ENCODE measurements at regions of chr20 and their contacts with region 1.

Region 1: DNA sequence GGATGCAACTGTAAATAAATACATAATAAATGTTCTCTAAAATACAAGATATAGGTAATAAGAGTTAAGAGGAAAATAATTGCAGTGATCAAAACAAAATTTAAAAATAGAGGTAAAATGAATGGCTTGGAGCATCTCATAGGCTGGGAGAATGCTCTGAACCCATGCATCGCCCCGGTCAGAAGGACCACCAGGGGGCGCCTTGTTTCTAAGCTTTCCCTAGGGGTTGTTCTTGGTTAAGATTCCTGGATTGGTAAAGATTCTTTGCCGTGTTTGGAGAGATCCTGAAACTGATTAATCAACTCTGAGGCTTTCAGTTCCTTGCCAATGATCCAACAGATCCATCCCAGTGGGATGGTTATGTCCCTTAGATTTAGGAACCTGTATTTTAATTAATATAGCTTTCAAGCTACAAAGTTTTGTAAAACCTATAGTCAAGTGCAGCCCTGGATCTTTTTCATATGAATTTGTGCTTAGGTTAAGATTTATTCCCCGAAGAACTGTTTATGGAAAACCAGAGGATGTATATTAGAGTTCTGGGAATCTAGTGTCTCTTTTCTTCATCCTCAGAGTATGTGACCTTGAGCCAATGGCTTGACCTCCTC is 45.3 kb upstream of the PRELID3B start:
- DNase-seq: peak; percentile 84
- H3K4me3 Mint-ChIP-seq: no peak overlapping the region
- H3K27ac Mint-ChIP-seq: no peak overlapping the region
- H3K4me1 Mint-ChIP-seq: peaks cover 3% of the 10 kb centered on the region
- H3K27me3 Mint-ChIP-seq: peaks cover 18% of the 10 kb centered on the region

Region 2: GRCh38 chr20:59102841-59103299 is 14.9 kb after region 1 on chr20:
- CTCF ChIA-PET with region 1: interaction called, 12 read pairs
- POLR2A ChIA-PET with region 1: no interaction called
- DNase-seq: no peak
- H3K4me3 Mint-ChIP-seq: no peak overlapping the region
- H3K27ac Mint-ChIP-seq: no peak overlapping the region
- H3K4me1 Mint-ChIP-seq: peaks cover 11% of the 10 kb centered on the region
- H3K27me3 Mint-ChIP-seq: peaks cover 6% of the 10 kb centered on the region

Region 3: GRCh38 chr20:59159493-59160376 is 71.8 kb after region 1 on chr20:
- CTCF ChIA-PET with region 1: interaction called, 18 read pairs
- POLR2A ChIA-PET with region 1: interaction called, 5 read pairs
- DNase-seq: peak; percentile 70
- H3K4me3 Mint-ChIP-seq: peak overlapping the region; percentile 76
- H3K27ac Mint-ChIP-seq: peak overlapping the region; percentile 99
- H3K4me1 Mint-ChIP-seq: peaks cover 68% of the 10 kb centered on the region
- H3K27me3 Mint-ChIP-seq: peaks cover 1% of the 10 kb centered on the region

Region 4: GRCh38 chr20:59207742-59208357 is 119.9 kb after region 1 on chr20:
- CTCF ChIA-PET with region 1: interaction called, 137 read pairs
- POLR2A ChIA-PET with region 1: interaction called, 10 read pairs
- DNase-seq: peak; percentile 80
- H3K4me3 Mint-ChIP-seq: no peak overlapping the region
- H3K27ac Mint-ChIP-seq: no peak overlapping the region
- H3K4me1 Mint-ChIP-seq: peaks cover 2% of the 10 kb centered on the region
- H3K27me3 Mint-ChIP-seq: no peaks in the 10 kb centered on the region

Region 5: GRCh38 chr20:59222253-59223181 is 134.6 kb after region 1 on chr20:
- CTCF ChIA-PET with region 1: interaction called, 55 read pairs
- POLR2A ChIA-PET with region 1: interaction called, 6 read pairs
- DNase-seq: peak; percentile 80
- H3K4me3 Mint-ChIP-seq: peak overlapping the region; percentile 69
- H3K27ac Mint-ChIP-seq: no peak overlapping the region
- H3K4me1 Mint-ChIP-seq: peaks cover 9% of the 10 kb centered on the region
- H3K27me3 Mint-ChIP-seq: no peaks in the 10 kb centered on the region

Measured in activated CD4-positive, alpha-beta memory T cell treated with anti-CD3 and anti-CD28 coated beads, Interleukin-2, amount 10 ng/mL, durations not matched to agents 7 days and 5 days (primary cell).